ENCODE measurements at regions of chr1 and their contacts with region 1.

Region 1: DNA sequence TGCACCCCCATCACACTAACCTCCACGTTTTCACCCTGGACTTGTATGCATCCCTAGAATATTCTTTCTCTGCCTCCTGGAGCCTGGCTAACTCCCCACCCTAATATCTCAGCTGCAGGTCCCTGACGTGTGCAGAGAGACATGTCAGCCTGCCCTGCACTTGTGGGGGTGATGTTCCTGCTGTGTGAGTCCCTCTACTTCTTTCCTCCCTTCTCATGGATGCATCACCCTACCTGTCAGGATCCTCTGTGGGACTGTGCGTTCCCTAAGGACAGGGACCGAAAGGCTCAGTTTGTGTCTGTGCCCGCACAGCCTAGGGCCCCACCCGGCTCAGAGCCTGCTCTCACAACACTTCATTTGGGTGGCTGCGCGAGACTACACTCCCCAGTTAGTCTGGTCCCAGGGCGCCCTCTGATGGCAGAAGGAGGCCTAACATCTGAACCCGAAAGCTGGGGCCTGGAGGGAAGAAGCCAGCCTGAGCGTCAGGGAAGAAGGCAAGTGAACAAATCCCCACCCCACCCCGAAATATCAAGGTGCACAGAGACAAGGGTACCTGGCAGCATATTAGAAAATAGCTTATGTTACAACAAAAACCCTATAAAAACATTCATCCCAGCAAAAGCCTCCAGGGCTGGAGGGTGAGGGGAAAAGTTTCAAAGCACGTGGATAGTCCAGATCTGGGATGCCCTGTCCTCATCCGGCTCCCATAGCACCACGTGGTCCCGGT is 3.7 kb downstream of the CD52 start:
- DNase-seq: peak; percentile 88 to 95 (median 91)
- H3K4me3 ChIP-seq: peak overlapping the region in 1 of 2 donors; percentile 94
- H3K4me3 Mint-ChIP-seq: peak overlapping the region; percentile 91 to 100 (median 96)
- H3K27ac ChIP-seq: peak overlapping the region; percentile 69
- H3K27ac Mint-ChIP-seq: peak overlapping the region; percentile 83 to 99 (median 95)
- H3K4me1 ChIP-seq: peaks cover 48% of the 10 kb centered on the region
- H3K4me1 Mint-ChIP-seq: peaks cover 30 to 64% (median 47%) of the 10 kb centered on the region in 4 donors
- H3K27me3 ChIP-seq: no peaks in the 10 kb centered on the region
- H3K27me3 Mint-ChIP-seq: no peaks in the 10 kb centered on the region

Region 2: DNA sequence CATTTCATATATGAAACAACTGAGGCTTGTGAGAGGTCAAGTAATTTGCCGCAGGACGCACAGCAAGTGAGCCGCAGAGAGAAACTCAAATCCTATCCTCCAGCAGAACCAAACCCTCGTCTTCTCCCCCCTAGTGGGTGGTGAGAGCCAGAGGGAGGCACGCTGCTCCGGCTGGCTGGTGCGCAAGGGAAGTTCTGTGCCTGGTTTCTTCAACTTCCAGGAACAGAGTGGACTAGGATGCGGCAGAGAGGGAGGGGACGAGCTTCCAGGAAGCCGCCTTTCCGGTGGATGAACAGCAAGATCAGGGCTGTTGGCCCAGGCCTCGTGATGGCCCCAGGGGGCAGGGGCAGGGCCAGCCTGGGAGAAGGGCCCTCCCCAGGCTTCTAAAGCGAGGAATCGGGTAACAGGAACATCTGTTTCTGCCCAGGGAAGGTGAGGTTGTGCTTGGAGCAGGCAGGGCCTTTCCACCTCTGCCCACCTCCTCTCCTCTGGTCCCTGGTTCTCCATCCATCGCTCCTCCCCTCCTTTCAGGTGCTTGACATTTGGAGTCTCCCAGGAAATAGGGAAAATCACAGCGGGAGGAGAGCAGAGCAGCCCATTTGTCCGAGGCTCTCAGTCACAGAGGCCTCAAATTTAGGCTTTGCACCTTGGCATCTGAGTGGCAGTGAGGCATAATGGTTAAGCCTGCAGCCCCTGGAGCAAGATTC is 226.6 kb before region 1 on chr1:
- CTCF ChIA-PET with region 1: no interaction called
- POLR2A ChIA-PET with region 1: no interaction called
- intact Hi-C with region 1: no loop called
- DNase-seq: no peak
- H3K4me3 ChIP-seq: no peak overlapping the region
- H3K4me3 Mint-ChIP-seq: no peak overlapping the region
- H3K27ac ChIP-seq: no peak overlapping the region
- H3K27ac Mint-ChIP-seq: no peak overlapping the region
- H3K4me1 ChIP-seq: no peaks in the 10 kb centered on the region
- H3K4me1 Mint-ChIP-seq: no peaks in the 10 kb centered on the region
- H3K27me3 ChIP-seq: no peaks in the 10 kb centered on the region
- H3K27me3 Mint-ChIP-seq: peaks cover 11 to 18% of the 10 kb centered on the region in 2 donors

Region 3: GRCh38 chr1:26169669-26170471 is 151.6 kb before region 1 on chr1 and contains the start of gene ZNF593:
- CTCF ChIA-PET with region 1: interaction called, 10 read pairs
- POLR2A ChIA-PET with region 1: interaction called, 8 read pairs
- intact Hi-C with region 1: loop called (anchors 5 kb)
- DNase-seq: peak; percentile 74 to 81 (median 77)
- H3K4me3 ChIP-seq: peak within 1 kb of the TSS; percentile 52 to 90
- H3K4me3 Mint-ChIP-seq: peak within 1 kb of the TSS; percentile 83 to 91 (median 88)
- H3K27ac ChIP-seq: peak within 1 kb of the TSS; percentile 85
- H3K27ac Mint-ChIP-seq: peak within 1 kb of the TSS; percentile 71 to 94 (median 93)
- H3K4me1 ChIP-seq: peaks cover 20% of the 10 kb centered on the region
- H3K4me1 Mint-ChIP-seq: peaks cover 4 to 25% (median 16%) of the 10 kb centered on the region in 4 donors
- H3K27me3 ChIP-seq: no peaks in the 10 kb centered on the region
- H3K27me3 Mint-ChIP-seq: no peaks in the 10 kb centered on the region
- total RNA-seq, gene ZNF593: 10.7 to 12.4 TPM

Region 4: GRCh38 chr1:26284597-26285360 is 36.7 kb before region 1 on chr1:
- CTCF ChIA-PET with region 1: interaction called, 1,027 read pairs
- POLR2A ChIA-PET with region 1: interaction called, 3,358 read pairs
- intact Hi-C with region 1: loop called (anchors 1 kb)
- DNase-seq: peak; percentile 91 to 99 (median 92)
- H3K4me3 ChIP-seq: peak overlapping the region; percentile 38 to 50
- H3K4me3 Mint-ChIP-seq: peak overlapping the region; percentile 82 to 94 (median 89)
- H3K27ac ChIP-seq: peak overlapping the region; percentile 91
- H3K27ac Mint-ChIP-seq: peak overlapping the region; percentile 94 to 100 (median 99)
- H3K4me1 ChIP-seq: peaks cover 95% of the 10 kb centered on the region
- H3K4me1 Mint-ChIP-seq: peaks cover 63 to 96% (median 81%) of the 10 kb centered on the region in 4 donors
- H3K27me3 ChIP-seq: no peaks in the 10 kb centered on the region
- H3K27me3 Mint-ChIP-seq: no peaks in the 10 kb centered on the region

Region 5: GRCh38 chr1:26306290-26307229 is 14.9 kb before region 1 on chr1 and contains the start of gene UBXN11:
- CTCF ChIA-PET with region 1: interaction called, 128 read pairs
- POLR2A ChIA-PET with region 1: interaction called, 3,358 read pairs
- intact Hi-C with region 1: loop called (anchors 1 kb)
- DNase-seq: peak; percentile 90 to 97 (median 91)
- H3K4me3 ChIP-seq: peak within 1 kb of the TSS; percentile 69 to 86
- H3K4me3 Mint-ChIP-seq: peak within 1 kb of the TSS; percentile 95 to 99 (median 98)
- H3K27ac ChIP-seq: peak within 1 kb of the TSS; percentile 74
- H3K27ac Mint-ChIP-seq: peak within 1 kb of the TSS; percentile 92 to 99 (median 98)
- H3K4me1 ChIP-seq: peaks cover 42% of the 10 kb centered on the region
- H3K4me1 Mint-ChIP-seq: peaks cover 25 to 40% (median 33%) of the 10 kb centered on the region in 4 donors
- H3K27me3 ChIP-seq: no peaks in the 10 kb centered on the region
- H3K27me3 Mint-ChIP-seq: no peaks in the 10 kb centered on the region
- total RNA-seq, gene UBXN11: 115 to 117 TPM

Region 6: GRCh38 chr1:26358411-26359384 is 37.2 kb after region 1 on chr1:
- CTCF ChIA-PET with region 1: interaction called, 34 read pairs
- POLR2A ChIA-PET with region 1: interaction called, 32 read pairs
- intact Hi-C with region 1: loop called (anchors 2 kb)
- DNase-seq: peak; percentile 79 to 95 (median 81)
- H3K4me3 ChIP-seq: peak overlapping the region in 1 of 2 donors; percentile 44
- H3K4me3 Mint-ChIP-seq: peak overlapping the region; percentile 58 to 88 (median 74)
- H3K27ac ChIP-seq: peak overlapping the region; percentile 40
- H3K27ac Mint-ChIP-seq: peak overlapping the region; percentile 79 to 97 (median 94)
- H3K4me1 ChIP-seq: peaks cover 56% of the 10 kb centered on the region
- H3K4me1 Mint-ChIP-seq: peaks cover 27 to 70% (median 41%) of the 10 kb centered on the region in 4 donors
- H3K27me3 ChIP-seq: no peaks in the 10 kb centered on the region
- H3K27me3 Mint-ChIP-seq: no peaks in the 10 kb centered on the region

Region 7: GRCh38 chr1:26372039-26372438 is 50.6 kb after region 1 on chr1:
- CTCF ChIA-PET with region 1: interaction called, 23 read pairs
- POLR2A ChIA-PET with region 1: interaction called, 111 read pairs
- intact Hi-C with region 1: no loop called
- DNase-seq: no peak
- H3K4me3 ChIP-seq: peak overlapping the region in 1 of 2 donors; percentile 18
- H3K4me3 Mint-ChIP-seq: peak overlapping the region in 7 of 8 donors; percentile 8 to 81 (median 61)
- H3K27ac ChIP-seq: no peak overlapping the region
- H3K27ac Mint-ChIP-seq: peak overlapping the region; percentile 75 to 96 (median 86)
- H3K4me1 ChIP-seq: peaks cover 94% of the 10 kb centered on the region
- H3K4me1 Mint-ChIP-seq: peaks cover 60 to 86% (median 73%) of the 10 kb centered on the region in 4 donors
- H3K27me3 ChIP-seq: no peaks in the 10 kb centered on the region
- H3K27me3 Mint-ChIP-seq: no peaks in the 10 kb centered on the region

Region 8: GRCh38 chr1:26733982-26734381 is 412.5 kb after region 1 on chr1:
- CTCF ChIA-PET with region 1: no interaction called
- POLR2A ChIA-PET with region 1: no interaction called
- intact Hi-C with region 1: no loop called
- DNase-seq: peak; percentile 15 to 52 (median 21)
- H3K4me3 ChIP-seq: no peak overlapping the region
- H3K4me3 Mint-ChIP-seq: peak overlapping the region in 6 of 8 donors; percentile 26 to 77 (median 56)
- H3K27ac ChIP-seq: peak overlapping the region; percentile 16
- H3K27ac Mint-ChIP-seq: peak overlapping the region; percentile 74 to 87 (median 80)
- H3K4me1 ChIP-seq: peaks cover 45% of the 10 kb centered on the region
- H3K4me1 Mint-ChIP-seq: peaks cover 33 to 61% (median 49%) of the 10 kb centered on the region in 4 donors
- H3K27me3 ChIP-seq: no peaks in the 10 kb centered on the region
- H3K27me3 Mint-ChIP-seq: no peaks in the 10 kb centered on the region

Measured in CD4-positive, alpha-beta memory T cell (primary cell).